ENCODE measurements at regions of chr18 and their contacts with region 1.

Region 1: GRCh38 chr18:48445540-48445939 is 36.4 kb upstream of the ZBTB7C start:
- DNase-seq: peak; percentile 53 to 77 (median 61)
- ATAC-seq: peak; percentile 63 to 82 (median 72)
- H3K4me3 ChIP-seq: no peak overlapping the region
- H3K27ac ChIP-seq: no peak overlapping the region
- H3K4me1 ChIP-seq: peaks cover 0 to 36% (median 17%) of the 10 kb centered on the region in 12 donors
- H3K27me3 ChIP-seq: peaks cover 0 to 4% (median 0%) of the 10 kb centered on the region in 9 donors
- CTCF ChIP-seq: peak; percentile 76 to 90 (median 84)
- POLR2A ChIP-seq: no peak

Region 2: GRCh38 chr18:47756364-47757016 is 689.0 kb before region 1 on chr18:
- intact Hi-C with region 1: no loop called
- DNase-seq: peak; percentile 28 to 66 (median 45)
- ATAC-seq: peak; percentile 32 to 58 (median 58)
- H3K4me3 ChIP-seq: no peak overlapping the region
- H3K27ac ChIP-seq: no peak overlapping the region
- H3K4me1 ChIP-seq: no peaks in the 10 kb centered on the region
- H3K27me3 ChIP-seq: peaks cover 0 to 26% (median 4%) of the 10 kb centered on the region in 9 donors
- CTCF ChIP-seq: peak; percentile 68 to 88 (median 84)
- POLR2A ChIP-seq: no peak

Region 3: DNA sequence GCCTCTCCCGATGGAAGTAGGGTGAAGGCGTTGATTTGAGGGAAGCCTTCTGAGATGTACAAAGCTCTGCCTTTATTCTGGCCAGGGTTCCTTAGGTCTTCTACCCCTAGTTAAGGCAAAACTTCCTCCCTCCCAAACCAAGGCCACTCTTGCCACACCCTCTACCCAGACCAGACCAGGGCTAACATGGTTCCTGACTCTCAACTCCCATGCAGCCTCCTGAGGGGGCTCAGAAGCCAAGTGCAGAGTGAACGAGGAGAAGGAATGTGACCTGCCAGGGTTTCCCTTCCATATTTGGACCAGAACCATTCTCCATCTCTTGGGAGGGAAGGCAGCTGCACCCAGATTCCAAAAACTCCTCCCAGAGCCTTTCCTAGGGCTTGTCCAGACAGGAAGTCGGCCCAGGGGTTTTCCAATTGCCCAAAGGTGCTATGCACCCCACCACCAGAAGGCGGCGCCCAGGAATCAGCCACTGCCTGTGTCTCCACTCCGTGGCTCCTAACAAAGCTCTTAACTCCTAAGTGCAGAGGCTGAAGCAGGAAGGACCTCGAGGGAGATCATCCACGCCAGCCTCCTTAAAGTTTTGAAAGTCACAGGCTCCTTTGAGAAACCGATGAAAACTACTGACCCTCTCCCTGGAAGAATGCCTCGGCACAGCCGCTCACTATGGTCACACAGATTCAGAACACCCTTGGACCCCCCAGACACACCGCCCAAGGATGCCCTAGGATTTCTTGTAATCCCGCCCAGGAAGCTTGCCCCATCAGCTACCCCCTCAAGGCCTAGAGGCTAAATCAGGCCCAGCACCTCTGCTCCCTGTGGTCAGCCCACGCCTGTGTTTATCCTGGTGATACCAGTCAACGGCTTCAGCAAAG is 672.9 kb before region 1 on chr18:
- intact Hi-C with region 1: loop called in 3 of 10 experiments (anchors 10 kb)
- DNase-seq: peak in 3 of 5 donors; percentile 29 to 80 (median 43)
- ATAC-seq: peak in 3 of 4 donors; percentile 71 to 76 (median 72)
- H3K4me3 ChIP-seq: no peak overlapping the region
- H3K27ac ChIP-seq: no peak overlapping the region
- H3K4me1 ChIP-seq: no peaks in the 10 kb centered on the region
- H3K27me3 ChIP-seq: peaks cover 0 to 4% (median 0%) of the 10 kb centered on the region in 9 donors
- CTCF ChIP-seq: peak; percentile 52 to 85 (median 66)
- POLR2A ChIP-seq: no peak

Region 4: GRCh38 chr18:48030616-48031480 is 414.7 kb before region 1 on chr18:
- intact Hi-C with region 1: loop called (anchors 1 to 2 kb)
- DNase-seq: peak in 2 of 5 donors; percentile 48 to 60
- ATAC-seq: peak; percentile 43 to 86 (median 76)
- H3K4me3 ChIP-seq: no peak overlapping the region
- H3K27ac ChIP-seq: no peak overlapping the region
- H3K4me1 ChIP-seq: peaks cover 0 to 26% (median 11%) of the 10 kb centered on the region in 12 donors
- H3K27me3 ChIP-seq: no peaks in the 10 kb centered on the region
- CTCF ChIP-seq: peak; percentile 51 to 81 (median 74)
- POLR2A ChIP-seq: no peak

Region 5: GRCh38 chr18:48161191-48161910 is 284.2 kb before region 1 on chr18:
- intact Hi-C with region 1: loop called in 1 of 10 experiments (anchors 10 kb)
- DNase-seq: peak; percentile 86 to 90 (median 89)
- ATAC-seq: peak; percentile 93 to 98 (median 96)
- H3K4me3 ChIP-seq: peak overlapping the region; percentile 41 to 96 (median 68)
- H3K27ac ChIP-seq: peak overlapping the region; percentile 80 to 96 (median 90)
- H3K4me1 ChIP-seq: peaks cover 1 to 43% (median 23%) of the 10 kb centered on the region in 12 donors
- H3K27me3 ChIP-seq: no peaks in the 10 kb centered on the region
- CTCF ChIP-seq: no peak
- POLR2A ChIP-seq: peak in 1 of 2 donors; percentile 52

Region 6: DNA sequence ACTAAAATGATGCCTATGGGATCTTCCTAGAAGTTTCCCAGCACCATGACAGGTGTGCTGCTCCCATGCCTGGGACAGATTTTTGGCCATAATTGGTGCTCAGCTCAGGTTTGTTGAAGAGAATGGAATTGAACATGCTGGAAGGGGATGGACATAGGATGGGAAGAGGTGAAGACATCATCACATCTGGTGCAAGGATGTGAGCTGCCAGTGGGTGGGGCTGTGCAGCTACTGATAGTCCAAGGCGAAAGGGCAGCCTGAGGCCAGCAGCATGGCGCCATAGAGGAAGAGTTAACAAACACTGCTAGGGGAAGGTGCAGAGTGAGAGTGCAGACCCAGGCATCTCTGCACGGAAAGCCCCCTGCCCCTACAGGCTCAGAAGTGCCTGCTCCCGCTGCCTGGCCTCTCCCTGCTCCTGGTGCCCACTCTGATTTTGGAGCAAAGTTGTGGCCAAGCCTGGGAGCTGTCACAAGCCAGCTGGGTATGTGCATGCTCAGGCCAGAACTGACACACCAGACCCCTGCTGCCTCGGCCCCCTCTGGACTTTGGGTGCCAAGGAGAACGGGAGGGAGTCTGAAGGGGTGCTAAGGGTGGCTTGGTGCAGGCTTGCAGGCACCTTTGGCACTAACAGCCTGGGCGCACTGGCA is 214.9 kb before region 1 on chr18:
- intact Hi-C with region 1: loop called in 6 of 10 experiments (anchors 5 to 10 kb)
- DNase-seq: peak in 2 of 5 donors; percentile 40 to 55
- ATAC-seq: peak; percentile 37 to 71 (median 59)
- H3K4me3 ChIP-seq: no peak overlapping the region
- H3K27ac ChIP-seq: no peak overlapping the region
- H3K4me1 ChIP-seq: peaks cover 0 to 38% (median 22%) of the 10 kb centered on the region in 12 donors
- H3K27me3 ChIP-seq: no peaks in the 10 kb centered on the region
- CTCF ChIP-seq: peak in 10 of 12 donors; percentile 18 to 54 (median 44)
- POLR2A ChIP-seq: no peak

Region 7: DNA sequence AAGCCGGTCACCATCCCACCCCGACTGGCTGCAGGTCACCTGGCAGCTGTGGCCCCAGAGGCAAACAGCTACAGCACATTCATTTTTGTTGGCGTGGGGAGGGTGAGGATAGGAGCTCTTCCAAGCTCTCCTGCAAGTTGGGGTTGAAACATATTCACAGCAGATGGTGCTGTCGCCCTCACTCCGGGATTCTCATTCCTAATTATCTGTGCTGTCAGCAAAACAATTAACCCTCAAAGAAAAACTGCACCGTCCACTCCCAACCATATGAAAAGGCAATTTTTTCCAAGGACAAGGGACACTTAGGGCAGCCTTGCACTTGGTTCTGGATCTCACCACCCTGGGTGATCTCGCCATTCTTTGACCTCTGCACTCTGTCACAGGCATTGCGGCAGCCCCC is 105.0 kb before region 1 on chr18:
- intact Hi-C with region 1: loop called in 6 of 10 experiments (anchors 2 to 10 kb)
- DNase-seq: no peak
- ATAC-seq: peak in 1 of 4 donors; percentile 9
- H3K4me3 ChIP-seq: no peak overlapping the region
- H3K27ac ChIP-seq: peak overlapping the region in 1 of 12 donors; percentile 12
- H3K4me1 ChIP-seq: peaks cover 0 to 25% (median 5%) of the 10 kb centered on the region in 12 donors
- H3K27me3 ChIP-seq: no peaks in the 10 kb centered on the region
- CTCF ChIP-seq: peak in 4 of 12 donors; percentile 12 to 38 (median 34)
- POLR2A ChIP-seq: no peak

Region 8: GRCh38 chr18:48410095-48410920 is 35.2 kb before region 1 on chr18:
- intact Hi-C with region 1: loop called in 1 of 10 experiments (anchors 5 kb)
- DNase-seq: peak; percentile 91 to 96 (median 94)
- ATAC-seq: peak; percentile 97 to 99 (median 98)
- H3K4me3 ChIP-seq: peak overlapping the region; percentile 68 to 87 (median 78)
- H3K27ac ChIP-seq: peak overlapping the region in 11 of 12 donors; percentile 56 to 83 (median 73)
- H3K4me1 ChIP-seq: peaks cover 0 to 23% (median 12%) of the 10 kb centered on the region in 12 donors
- H3K27me3 ChIP-seq: peaks cover 0 to 56% (median 5%) of the 10 kb centered on the region in 9 donors
- CTCF ChIP-seq: no peak
- POLR2A ChIP-seq: peak in 1 of 2 donors; percentile 66